IMR-90 (cell line): ENCODE measurements at regions of chr2 and their contacts with region 1.

Region 1: DNA sequence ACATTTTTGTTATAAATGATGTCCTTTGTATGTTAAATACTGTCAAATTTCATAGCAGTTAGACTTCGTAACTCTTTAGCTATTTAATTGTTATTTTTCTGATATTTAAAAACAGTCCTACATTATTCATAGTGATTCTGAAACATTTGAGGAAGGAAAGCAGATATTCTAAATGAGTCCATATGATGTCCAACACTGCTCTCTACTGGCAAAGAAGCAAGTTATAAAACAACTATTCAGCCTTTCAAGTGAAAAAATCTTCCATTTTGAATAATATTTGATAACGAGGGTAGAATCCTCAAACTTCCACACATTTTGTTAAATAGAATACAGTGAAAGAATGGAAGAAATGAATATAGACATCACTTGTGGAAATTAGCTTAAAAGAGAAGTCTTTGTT is 220.8 kb downstream of the GULP1 start:
- DNase-seq: peak; percentile 77
- ATAC-seq: peak; percentile 84
- H3K4me3 ChIP-seq: no peak overlapping the region
- H3K27ac ChIP-seq: no peak overlapping the region
- H3K4me1 ChIP-seq: no peaks in the 10 kb centered on the region
- H3K27me3 ChIP-seq: no peaks in the 10 kb centered on the region
- CTCF ChIP-seq: peak; percentile 80
- POLR2A ChIP-seq: peak; percentile 24; the same call in 1 of the 2 replicates
- RAD21 ChIP-seq: peak; percentile 94

Region 2: DNA sequence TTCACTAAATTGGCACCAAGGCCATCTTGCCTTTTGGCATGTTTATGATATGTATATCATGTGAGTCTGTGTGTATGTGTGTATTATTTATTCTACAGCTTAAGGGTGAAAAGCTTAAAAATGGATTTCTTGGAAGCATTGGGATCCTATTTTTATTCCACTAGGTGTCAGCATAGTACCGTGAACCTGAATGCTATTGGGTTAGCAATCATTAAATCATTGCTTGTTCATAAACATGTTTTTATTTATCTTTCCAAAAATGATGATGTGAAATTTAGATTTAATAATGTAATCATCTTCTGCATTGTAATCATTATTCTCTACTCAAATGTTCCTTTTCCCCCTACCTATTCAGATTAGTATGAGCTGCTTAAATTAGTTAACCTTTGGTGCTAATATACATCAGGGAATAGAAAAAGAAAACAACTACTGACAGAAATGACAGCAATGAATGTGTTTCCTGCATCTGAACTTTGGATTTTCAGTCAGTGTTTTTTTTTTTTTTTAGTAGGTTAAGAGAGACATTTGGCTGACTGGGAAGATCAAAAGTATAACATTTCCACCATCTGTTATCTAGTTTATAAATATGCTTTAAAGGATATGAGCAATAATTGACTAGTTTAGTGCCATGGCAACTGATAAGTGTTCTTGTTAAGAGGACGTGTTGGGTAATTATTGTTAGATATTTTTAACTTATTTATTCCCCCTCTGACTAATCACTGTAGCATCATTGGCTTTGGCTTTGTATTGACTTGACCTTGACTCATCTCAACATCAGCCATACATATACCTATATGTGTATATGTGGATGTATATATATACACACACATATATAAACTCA is 1649.4 kb before region 1 on chr2:
- CTCF ChIA-PET with region 1: no interaction called
- POLR2A ChIA-PET with region 1: no interaction called
- dilution Hi-C with region 1: no loop called
- in situ Hi-C with region 1: no loop called
- intact Hi-C with region 1: loop called (anchors 10 kb)
- DNase-seq: peak; percentile 35
- ATAC-seq: peak; percentile 79
- H3K4me3 ChIP-seq: no peak overlapping the region
- H3K27ac ChIP-seq: no peak overlapping the region
- H3K4me1 ChIP-seq: no peaks in the 10 kb centered on the region
- H3K27me3 ChIP-seq: peaks cover 2% of the 10 kb centered on the region
- CTCF ChIP-seq: peak; percentile 83
- POLR2A ChIP-seq: no peak
- RAD21 ChIP-seq: peak; percentile 85

Region 3: GRCh38 chr2:187581125-187581896 is 931.1 kb before region 1 on chr2:
- CTCF ChIA-PET with region 1: no interaction called
- POLR2A ChIA-PET with region 1: no interaction called
- dilution Hi-C with region 1: no loop called
- in situ Hi-C with region 1: no loop called
- intact Hi-C with region 1: loop called (anchors 5 kb)
- DNase-seq: peak; percentile 52
- ATAC-seq: peak; percentile 31; the same call in 1 of the 2 replicates
- H3K4me3 ChIP-seq: peak overlapping the region; percentile 39
- H3K27ac ChIP-seq: no peak overlapping the region
- H3K4me1 ChIP-seq: peaks cover 5% of the 10 kb centered on the region
- H3K27me3 ChIP-seq: no peaks in the 10 kb centered on the region
- CTCF ChIP-seq: peak; percentile 67
- POLR2A ChIP-seq: no peak
- RAD21 ChIP-seq: peak; percentile 52

Region 4: DNA sequence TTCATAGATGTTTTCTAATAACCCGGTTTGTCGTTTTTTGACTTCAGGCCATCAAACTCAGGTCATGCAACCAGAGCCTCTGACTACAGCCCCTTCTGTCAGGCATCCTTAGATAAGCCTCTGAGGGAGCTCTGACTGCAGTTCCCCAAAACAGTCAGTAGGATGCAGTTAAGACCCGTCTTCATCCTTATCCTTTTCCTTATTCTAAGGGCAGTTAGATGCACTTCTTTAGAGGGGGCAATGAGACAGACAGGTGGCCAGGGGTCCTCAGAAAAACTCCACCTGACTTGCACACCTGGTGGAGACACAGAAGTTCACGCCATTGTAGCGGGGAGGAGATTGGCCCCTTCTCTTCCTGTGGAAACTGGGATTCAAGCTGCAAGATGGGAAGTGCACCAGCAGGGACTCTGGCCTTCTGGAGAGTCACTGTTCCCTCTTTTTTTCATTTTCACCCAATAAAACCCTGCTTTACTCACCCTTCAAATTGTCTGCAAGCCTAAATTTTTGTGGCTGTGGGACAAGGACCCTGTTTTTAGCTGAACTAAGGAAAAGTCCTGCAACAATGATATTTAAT is 853.4 kb before region 1 on chr2:
- CTCF ChIA-PET with region 1: interaction called, 3 read pairs
- POLR2A ChIA-PET with region 1: no interaction called
- dilution Hi-C with region 1: no loop called
- in situ Hi-C with region 1: no loop called
- intact Hi-C with region 1: loop called (anchors 5 kb)
- DNase-seq: peak; percentile 45
- ATAC-seq: peak; percentile 87; the same call in 1 of the 2 replicates
- H3K4me3 ChIP-seq: no peak overlapping the region
- H3K27ac ChIP-seq: no peak overlapping the region
- H3K4me1 ChIP-seq: no peaks in the 10 kb centered on the region
- H3K27me3 ChIP-seq: no peaks in the 10 kb centered on the region
- CTCF ChIP-seq: peak; percentile 46
- POLR2A ChIP-seq: no peak
- RAD21 ChIP-seq: peak; percentile 43; the same call in 1 of the 2 replicates